ENCODE measurements at regions of chr7 and their contacts with region 1.

Region 1: DNA sequence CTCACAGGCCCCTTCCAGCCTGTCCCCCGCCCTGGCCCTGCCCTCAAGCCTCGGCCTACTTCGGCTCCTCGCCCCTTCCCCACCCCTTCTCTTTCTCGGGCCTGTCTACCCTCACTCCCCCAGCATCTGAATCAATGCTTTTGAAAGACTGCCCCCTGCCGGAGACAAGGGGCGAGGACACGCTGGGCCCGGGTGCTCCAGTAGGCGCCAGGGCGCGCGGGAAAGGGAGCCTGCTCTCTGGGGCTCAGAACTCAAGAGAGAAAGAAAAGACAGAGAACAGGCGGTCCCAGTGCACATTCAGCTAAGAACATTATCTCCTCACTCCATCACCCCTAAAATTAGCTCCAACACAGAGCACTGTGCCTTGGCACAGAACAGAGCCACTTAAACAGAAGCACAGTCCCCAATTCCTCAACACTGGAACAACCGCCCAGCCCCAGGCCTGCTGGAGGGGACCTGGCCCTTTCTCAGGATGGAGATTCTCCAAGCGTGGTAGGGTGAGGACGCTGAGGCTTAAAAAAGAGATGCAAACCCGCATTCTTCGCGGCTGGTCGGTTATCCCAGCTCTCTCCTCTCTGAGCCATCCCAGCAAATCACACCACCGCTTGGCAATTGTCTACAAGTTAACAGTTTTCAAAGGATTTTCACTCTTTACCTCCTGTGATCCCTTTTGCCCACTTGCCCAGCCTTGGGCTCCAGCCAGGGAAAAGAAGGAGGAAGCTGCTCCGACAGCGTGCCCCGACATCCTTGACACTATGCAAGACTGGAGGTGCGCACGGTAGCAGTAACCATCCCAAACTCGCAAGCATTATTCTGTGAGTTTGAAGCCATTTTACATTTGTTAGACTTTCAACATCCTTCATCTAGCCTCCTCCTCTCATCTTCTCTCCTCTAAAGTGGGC is 2.1 kb downstream of the GIGYF1 start:
- DNase-seq: peak; percentile 74 to 86 (median 81)
- H3K4me3 ChIP-seq: peak overlapping the region in 5 of 7 experiments; percentile 47 to 94 (median 85)
- H3K27ac ChIP-seq: no peak overlapping the region
- H3K4me1 ChIP-seq: peaks cover 11 to 35% (median 31%) of the 10 kb centered on the region in 4 experiments
- H3K27me3 ChIP-seq: peaks cover 0 to 2% (median 0%) of the 10 kb centered on the region in 5 experiments

Region 2: DNA sequence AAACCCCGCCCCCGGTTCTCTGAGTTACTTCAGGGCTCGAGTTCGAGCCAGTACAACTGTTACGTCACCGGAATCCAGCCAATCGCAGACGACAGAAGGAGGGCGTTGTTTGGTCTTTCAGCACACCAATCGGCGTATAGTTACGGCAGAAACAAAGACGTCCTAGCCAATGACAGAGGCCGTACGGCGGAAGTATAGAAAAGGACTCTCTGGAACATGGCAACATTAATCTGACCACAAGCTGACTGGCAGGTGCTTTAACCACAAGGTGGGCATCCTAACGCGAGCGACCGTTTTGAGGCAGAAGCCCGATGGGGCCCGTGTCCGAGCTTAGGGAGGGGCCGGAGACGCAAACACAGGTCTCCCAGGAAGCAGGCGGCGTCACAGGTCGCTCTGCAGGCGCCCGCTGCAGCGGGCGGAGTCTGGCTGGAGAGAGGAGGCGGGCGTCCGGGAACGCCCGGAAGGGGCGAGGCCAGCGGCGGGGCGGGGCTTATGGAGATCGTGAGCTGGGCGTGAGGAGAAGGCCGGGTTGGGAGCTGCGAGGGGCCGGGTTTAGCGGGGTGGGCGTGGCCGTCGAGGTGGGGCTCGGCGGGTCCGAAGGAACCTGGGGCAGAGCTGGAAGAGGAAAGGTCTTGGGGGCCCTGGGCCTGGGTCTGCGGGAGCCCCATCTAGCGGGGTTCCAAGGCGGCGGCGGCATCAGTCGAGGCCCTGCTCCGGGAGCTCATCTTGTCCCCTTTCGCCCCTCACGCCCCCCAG is 79.8 kb before region 1 on chr7 and contains the start of gene MOSPD3:
- CTCF ChIA-PET with region 1: interaction called, 55 read pairs
- POLR2A ChIA-PET with region 1: interaction called, 5 read pairs
- DNase-seq: peak; percentile 99 to 100 (median 99)
- H3K4me3 ChIP-seq: peak within 1 kb of the TSS; percentile 75 to 91 (median 84)
- H3K27ac ChIP-seq: peak within 1 kb of the TSS; percentile 40 to 88
- H3K4me1 ChIP-seq: peaks cover 4 to 24% (median 19%) of the 10 kb centered on the region in 4 experiments
- H3K27me3 ChIP-seq: peaks cover 0 to 2% (median 0%) of the 10 kb centered on the region in 5 experiments

Region 3: GRCh38 chr7:100626530-100627237 is 65.2 kb before region 1 on chr7:
- CTCF ChIA-PET with region 1: interaction called, 36 read pairs
- POLR2A ChIA-PET with region 1: no interaction called
- DNase-seq: peak; percentile 82 to 88 (median 88)
- H3K4me3 ChIP-seq: peak overlapping the region in 5 of 7 experiments; percentile 19 to 69 (median 38)
- H3K27ac ChIP-seq: no peak overlapping the region
- H3K4me1 ChIP-seq: peaks cover 0 to 13% (median 10%) of the 10 kb centered on the region in 4 experiments
- H3K27me3 ChIP-seq: no peaks in the 10 kb centered on the region

Region 4: GRCh38 chr7:100632951-100633717 is 58.8 kb before region 1 on chr7:
- CTCF ChIA-PET with region 1: interaction called, 74 read pairs
- POLR2A ChIA-PET with region 1: interaction called, 3 read pairs
- DNase-seq: peak; percentile 57 to 73 (median 68)
- H3K4me3 ChIP-seq: peak overlapping the region; percentile 13 to 78 (median 58)
- H3K27ac ChIP-seq: no peak overlapping the region
- H3K4me1 ChIP-seq: peaks cover 0 to 14% (median 11%) of the 10 kb centered on the region in 4 experiments
- H3K27me3 ChIP-seq: no peaks in the 10 kb centered on the region

Region 5: DNA sequence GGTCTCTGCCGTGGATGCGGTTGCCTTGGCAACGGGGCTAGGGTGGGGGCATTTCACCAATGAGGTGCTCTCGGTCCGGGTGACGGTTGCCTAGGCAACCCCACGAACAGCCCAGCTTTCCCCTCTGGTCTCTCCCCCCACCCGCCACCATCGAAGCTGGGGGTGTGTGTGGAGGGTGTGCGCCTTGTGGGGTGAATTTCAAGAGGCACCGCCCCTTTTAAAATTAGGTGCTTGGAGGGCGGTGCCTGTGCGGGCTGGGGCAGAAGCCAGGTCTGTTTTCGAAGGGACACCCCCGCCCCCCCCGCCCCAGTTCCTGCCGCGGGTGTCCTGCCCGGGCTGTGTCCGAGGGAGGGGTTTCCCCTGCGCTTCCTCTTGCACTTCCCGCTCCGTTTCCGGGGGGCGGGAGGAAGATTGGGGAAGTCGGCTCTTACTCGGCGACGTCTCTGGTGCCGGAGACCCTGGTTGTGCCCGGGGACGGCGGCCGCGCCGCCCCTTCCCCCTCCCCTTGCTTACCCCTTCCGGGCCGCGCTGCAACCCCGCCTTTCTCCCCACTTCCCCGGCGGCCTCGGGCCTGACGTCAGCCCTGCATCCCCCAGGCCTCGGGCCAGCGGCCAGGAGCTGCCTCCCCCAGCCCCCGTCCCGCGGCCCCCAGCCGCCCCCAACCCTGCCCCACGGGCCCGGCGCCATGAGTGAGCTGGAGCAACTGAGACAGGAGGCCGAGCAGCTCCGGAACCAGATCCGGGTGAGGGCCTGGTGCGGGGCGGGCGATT is 16.2 kb before region 1 on chr7:
- CTCF ChIA-PET with region 1: interaction called, 80 read pairs
- POLR2A ChIA-PET with region 1: interaction called, 3 read pairs
- DNase-seq: peak; percentile 76 to 85 (median 79)
- H3K4me3 ChIP-seq: peak overlapping the region; percentile 32 to 96 (median 89)
- H3K27ac ChIP-seq: peak overlapping the region in 1 of 2 experiments; percentile 79
- H3K4me1 ChIP-seq: peaks cover 0 to 19% (median 13%) of the 10 kb centered on the region in 4 experiments
- H3K27me3 ChIP-seq: no peaks in the 10 kb centered on the region

Region 6: GRCh38 chr7:100705753-100706671 is 14.1 kb after region 1 on chr7 and contains the start of gene POP7:
- CTCF ChIA-PET with region 1: interaction called, 31 read pairs
- POLR2A ChIA-PET with region 1: no interaction called
- DNase-seq: peak; percentile 98 to 99 (median 98)
- H3K4me3 ChIP-seq: peak within 1 kb of the TSS; percentile 62 to 97 (median 89)
- H3K27ac ChIP-seq: peak within 1 kb of the TSS; percentile 64 to 87
- H3K4me1 ChIP-seq: peaks cover 0 to 23% (median 19%) of the 10 kb centered on the region in 4 experiments
- H3K27me3 ChIP-seq: no peaks in the 10 kb centered on the region

Measured in common myeloid progenitor, CD34-positive (primary cell).